Activated CD4-positive, alpha-beta T cell treated with anti-CD3 and anti-CD28 coated beads for 36 hours (primary cell): ENCODE measurements at regions of chr21 and their contacts with region 1.

Region 1: DNA sequence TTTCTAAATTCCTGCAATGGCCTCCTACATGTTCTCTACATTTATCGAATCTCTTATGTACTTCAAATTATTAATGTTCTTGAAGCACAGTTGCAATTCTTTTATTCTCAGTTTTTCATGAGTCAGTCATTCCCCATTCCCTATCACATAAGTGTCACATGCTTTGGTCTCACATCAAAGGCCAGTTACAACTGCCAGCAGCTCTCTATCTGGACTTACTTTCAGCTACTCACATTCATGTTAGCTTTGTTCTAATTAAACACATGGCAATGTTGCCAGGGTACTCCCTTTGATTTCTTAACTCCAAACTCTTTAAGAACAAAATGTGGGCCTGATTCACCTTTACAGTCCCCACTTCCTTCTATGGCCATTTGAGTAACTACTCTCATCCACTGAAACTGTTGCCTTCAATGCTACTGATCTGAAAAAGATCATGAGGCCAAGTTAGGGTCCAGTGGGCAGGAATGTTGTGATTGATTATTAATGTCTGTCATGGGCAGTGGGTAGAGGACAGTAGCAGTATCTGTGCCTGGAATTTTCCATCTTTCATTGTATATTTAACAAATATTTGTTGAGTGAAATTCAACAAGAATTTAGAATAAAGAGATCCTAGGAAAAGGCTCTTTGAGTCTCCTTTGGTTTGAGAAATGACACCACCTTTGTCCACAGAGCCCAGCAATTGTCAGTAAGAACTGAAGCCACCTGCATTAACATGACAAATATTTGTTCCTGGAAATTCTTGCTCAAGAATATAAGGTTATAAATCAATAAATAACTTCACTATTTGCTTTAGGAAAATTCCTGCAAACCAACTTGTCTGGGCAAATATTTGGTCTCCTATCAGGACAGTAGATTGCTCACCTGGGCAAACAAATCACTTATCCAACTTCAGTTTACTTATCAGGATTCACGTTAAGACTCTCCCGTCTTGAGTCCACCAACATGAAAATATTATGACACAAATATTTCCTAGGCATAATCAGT is 153.6 kb upstream of the SAMSN1 start:
- DNase-seq: no peak
- ATAC-seq: no peak
- H3K4me3 Mint-ChIP-seq: no peak overlapping the region
- H3K27ac Mint-ChIP-seq: no peak overlapping the region
- H3K4me1 Mint-ChIP-seq: no peaks in the 10 kb centered on the region
- H3K27me3 Mint-ChIP-seq: no peaks in the 10 kb centered on the region

Region 2: DNA sequence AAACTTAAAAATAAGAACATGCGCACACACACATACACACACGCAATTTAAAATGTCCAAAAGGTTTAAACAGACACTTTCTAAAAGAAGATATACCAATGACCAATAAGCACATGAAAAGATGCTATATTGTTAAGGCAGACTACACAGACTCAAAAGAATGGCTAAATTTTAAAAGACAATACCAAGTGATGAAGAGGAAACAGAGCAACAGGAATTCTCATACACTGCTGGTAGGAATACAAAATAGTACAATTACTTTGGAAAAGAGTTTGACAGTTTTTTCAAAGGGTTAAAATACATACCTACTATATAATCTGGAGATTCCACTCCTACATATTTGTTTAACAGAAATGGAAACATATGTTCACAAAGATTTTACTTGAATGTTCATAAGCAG is 86.0 kb after region 1 on chr21:
- CTCF ChIA-PET with region 1: no interaction called
- POLR2A ChIA-PET with region 1: no interaction called
- intact Hi-C with region 1: loop called in 1 of 2 experiments (anchors 2 kb)
- DNase-seq: no peak
- ATAC-seq: no peak
- H3K4me3 Mint-ChIP-seq: no peak overlapping the region
- H3K27ac Mint-ChIP-seq: no peak overlapping the region
- H3K4me1 Mint-ChIP-seq: no peaks in the 10 kb centered on the region
- H3K27me3 Mint-ChIP-seq: no peaks in the 10 kb centered on the region